ENCODE measurements at regions of chr3 and their contacts with region 1.

Region 1: GRCh38 chr3:39406368-39407258 is at the start of gene RPSA:
- DNase-seq: peak; percentile 98
- H3K4me3 Mint-ChIP-seq: peak within 1 kb of the TSS; percentile 81
- H3K27ac Mint-ChIP-seq: peak within 1 kb of the TSS; percentile 94
- H3K4me1 Mint-ChIP-seq: peaks cover 55% of the 10 kb centered on the region
- H3K27me3 Mint-ChIP-seq: no peaks in the 10 kb centered on the region
- total RNA-seq, gene RPSA: 1,760 to 1,774 TPM

Region 2: DNA sequence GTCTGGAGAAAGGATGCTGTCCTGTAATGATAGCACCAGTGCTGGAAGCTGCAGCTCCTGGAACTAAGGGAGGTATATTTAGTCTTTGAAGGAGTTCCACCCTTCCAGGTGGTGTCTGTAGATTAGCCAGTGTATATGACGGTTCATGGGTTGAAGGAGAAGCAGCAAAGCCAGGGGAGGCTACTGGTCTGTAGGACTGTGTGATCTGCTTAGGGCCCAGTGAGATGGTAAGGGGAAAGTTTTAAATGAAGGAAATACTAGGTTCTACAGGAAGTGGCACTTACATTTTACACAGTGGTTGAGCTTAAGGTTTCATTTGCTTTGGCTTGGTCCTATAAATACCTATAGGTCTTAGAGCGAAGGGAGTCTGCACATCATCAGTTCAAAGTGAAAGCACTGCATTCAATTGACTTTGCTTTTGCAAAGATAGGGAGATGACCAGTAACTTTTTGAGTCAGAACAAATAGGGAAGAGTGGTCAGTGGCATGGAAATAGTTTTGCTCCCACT is 17.8 kb before region 1 on chr3:
- CTCF ChIA-PET with region 1: interaction called, 26 read pairs
- POLR2A ChIA-PET with region 1: no interaction called
- DNase-seq: no peak
- H3K4me3 Mint-ChIP-seq: peak overlapping the region; percentile 17
- H3K27ac Mint-ChIP-seq: peak overlapping the region; percentile 81
- H3K4me1 Mint-ChIP-seq: peaks cover 66% of the 10 kb centered on the region
- H3K27me3 Mint-ChIP-seq: no peaks in the 10 kb centered on the region

Region 3: DNA sequence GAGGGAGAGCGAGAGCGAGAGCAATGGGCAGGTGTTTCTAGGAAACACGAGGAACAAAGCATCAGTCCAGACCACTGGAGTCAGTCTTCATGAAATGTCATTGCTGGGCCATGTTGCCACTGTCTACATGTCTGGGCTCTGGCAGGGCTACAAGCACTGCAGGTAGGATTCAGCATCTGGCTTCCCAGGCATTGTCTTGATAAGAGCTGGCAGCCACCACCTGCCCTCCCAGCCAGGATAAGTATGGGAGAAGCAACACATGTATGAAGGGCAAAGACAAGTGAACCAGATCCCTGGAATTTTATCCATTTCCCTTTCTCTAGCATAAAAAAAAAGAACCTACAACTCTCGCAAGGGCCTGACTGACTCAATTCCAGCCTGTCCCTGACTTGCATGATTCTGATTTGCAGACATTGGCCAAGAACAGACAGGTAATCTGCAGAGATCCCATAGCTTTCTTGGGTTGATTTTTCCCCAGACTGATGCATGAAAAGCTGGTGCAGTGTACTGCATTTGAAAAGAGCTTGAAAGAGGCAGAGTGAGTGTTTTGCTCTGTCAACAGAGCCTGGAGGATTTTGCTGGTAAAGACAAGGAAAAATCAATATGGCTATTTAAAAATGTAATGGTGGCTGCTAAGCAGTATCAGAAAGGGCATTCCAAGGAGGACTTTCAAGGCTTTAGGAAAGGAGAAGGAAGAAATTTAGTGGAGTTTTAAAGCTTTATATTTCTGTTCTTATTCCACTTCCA is 245.6 kb after region 1 on chr3:
- CTCF ChIA-PET with region 1: no interaction called
- POLR2A ChIA-PET with region 1: no interaction called
- DNase-seq: no peak
- H3K4me3 Mint-ChIP-seq: no peak overlapping the region
- H3K27ac Mint-ChIP-seq: no peak overlapping the region
- H3K4me1 Mint-ChIP-seq: no peaks in the 10 kb centered on the region
- H3K27me3 Mint-ChIP-seq: no peaks in the 10 kb centered on the region